ENCODE measurements at regions of chr17 and their contacts with region 1.

Region 1: GRCh38 chr17:55911186-55911585 is 160.3 kb downstream of the PCTP start:
- DNase-seq: no peak
- ATAC-seq: no peak
- H3K4me3 ChIP-seq: no peak overlapping the region
- H3K4me3 Mint-ChIP-seq: no peak overlapping the region
- H3K27ac ChIP-seq: no peak overlapping the region
- H3K27ac Mint-ChIP-seq: no peak overlapping the region
- H3K4me1 ChIP-seq: no peaks in the 10 kb centered on the region
- H3K4me1 Mint-ChIP-seq: no peaks in the 10 kb centered on the region
- H3K27me3 ChIP-seq: no peaks in the 10 kb centered on the region
- H3K27me3 Mint-ChIP-seq: peaks cover 0 to 10% of the 10 kb centered on the region in 2 donors
- CTCF ChIP-seq: no peak

Region 2: GRCh38 chr17:55969562-55970324 is 58.6 kb after region 1 on chr17:
- intact Hi-C with region 1: loop called (anchors 10 kb)
- DNase-seq: no peak
- ATAC-seq: no peak
- H3K4me3 ChIP-seq: no peak overlapping the region
- H3K4me3 Mint-ChIP-seq: no peak overlapping the region
- H3K27ac ChIP-seq: no peak overlapping the region
- H3K27ac Mint-ChIP-seq: no peak overlapping the region
- H3K4me1 ChIP-seq: no peaks in the 10 kb centered on the region
- H3K4me1 Mint-ChIP-seq: no peaks in the 10 kb centered on the region
- H3K27me3 ChIP-seq: no peaks in the 10 kb centered on the region
- H3K27me3 Mint-ChIP-seq: no peaks in the 10 kb centered on the region
- CTCF ChIP-seq: no peak

Measured in natural killer cell (primary cell).